ENCODE measurements at regions of chr18 and their contacts with region 1.

Region 1: GRCh38 chr18:55243857-55244256 is 284.6 kb upstream of the CCDC68 start:
- DNase-seq: no peak
- H3K4me3 ChIP-seq: no peak overlapping the region
- H3K27ac ChIP-seq: no peak overlapping the region
- H3K4me1 ChIP-seq: no peaks in the 10 kb centered on the region
- H3K27me3 ChIP-seq: no peaks in the 10 kb centered on the region
- CTCF ChIP-seq: no peak
- POLR2A ChIP-seq: no peak

Region 2: GRCh38 chr18:55322178-55322735 is 78.4 kb after region 1 on chr18:
- intact Hi-C with region 1: loop called (anchors 5 kb)
- DNase-seq: peak; percentile 71
- H3K4me3 ChIP-seq: peak overlapping the region; percentile 41 to 43
- H3K27ac ChIP-seq: peak overlapping the region; percentile 76 to 85
- H3K4me1 ChIP-seq: no peaks in the 10 kb centered on the region
- H3K27me3 ChIP-seq: no peaks in the 10 kb centered on the region
- CTCF ChIP-seq: no peak
- POLR2A ChIP-seq: peak; percentile 21